HepG2 (cell line): ENCODE measurements at regions of chr4 and their contacts with region 1.

Region 1: DNA sequence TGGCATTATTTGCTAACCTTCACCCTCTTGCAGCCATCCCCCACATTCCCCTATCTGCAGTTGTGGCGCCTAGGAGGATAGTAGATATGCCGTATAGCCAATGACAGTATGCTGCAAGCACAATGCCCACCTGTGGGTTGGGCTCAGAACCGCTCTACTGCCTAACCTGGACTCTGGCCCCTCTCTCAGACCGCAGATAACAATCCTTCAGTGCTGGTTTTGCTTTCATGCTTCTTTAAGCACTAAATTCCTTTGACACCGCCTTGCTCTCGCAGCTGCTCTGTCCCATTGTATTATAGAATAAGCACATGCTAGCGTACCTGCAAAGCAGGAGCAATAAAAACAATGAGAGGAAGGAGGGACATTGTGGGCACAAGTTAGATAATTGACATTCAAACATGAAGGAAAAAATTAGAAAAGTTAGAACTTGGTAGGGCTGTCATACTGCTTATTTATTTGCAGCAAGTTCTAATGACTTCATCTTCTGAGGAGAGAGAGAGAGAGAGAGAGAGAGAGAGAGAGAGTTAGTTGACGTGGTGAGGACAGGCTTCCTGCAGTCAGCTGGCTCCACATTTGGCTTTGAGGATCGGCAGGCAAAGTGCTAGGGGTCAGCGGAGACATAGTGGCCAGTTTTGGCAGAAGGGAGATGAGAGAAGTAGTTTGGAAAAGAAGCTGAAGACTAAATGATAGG is 55.8 kb downstream of the WWC2 start:
- DNase-seq: peak; percentile 96
- ATAC-seq: peak; percentile 99
- H3K4me3 ChIP-seq: peak overlapping the region; percentile 13 to 17 (median 15); a peak in 3 of 6 replicates
- H3K27ac ChIP-seq: peak overlapping the region; percentile 64
- H3K4me1 ChIP-seq: peaks cover 70% of the 10 kb centered on the region
- H3K27me3 ChIP-seq: no peaks in the 10 kb centered on the region
- CTCF ChIP-seq: no peak
- EP300 ChIP-seq: peak; percentile 30 to 52; a peak in 2 of 4 replicates
- POLR2A ChIP-seq: no peak
- RAD21 ChIP-seq: no peak; the same call in 1 of the 2 replicates

Region 2: GRCh38 chr4:182354867-182355266 is 800.0 kb before region 1 on chr4:
- CTCF ChIA-PET with region 1: no interaction called
- POLR2A ChIA-PET with region 1: no interaction called
- in situ Hi-C with region 1: no loop called
- intact Hi-C with region 1: no loop called
- DNase-seq: no peak
- ATAC-seq: no peak
- H3K4me3 ChIP-seq: no peak overlapping the region
- H3K27ac ChIP-seq: no peak overlapping the region
- H3K4me1 ChIP-seq: no peaks in the 10 kb centered on the region
- H3K27me3 ChIP-seq: peaks cover 0 to 10% of the 10 kb centered on the region in 2 experiments; a peak in 1 of 5 replicates
- CTCF ChIP-seq: no peak
- EP300 ChIP-seq: no peak
- POLR2A ChIP-seq: no peak
- RAD21 ChIP-seq: no peak

Region 3: GRCh38 chr4:183080372-183081115 is 74.3 kb before region 1 on chr4:
- CTCF ChIA-PET with region 1: no interaction called
- POLR2A ChIA-PET with region 1: interaction called, 3 read pairs
- in situ Hi-C with region 1: no loop called
- intact Hi-C with region 1: loop called (anchors 1 kb)
- DNase-seq: peak; percentile 93
- ATAC-seq: peak; percentile 90
- H3K4me3 ChIP-seq: peak overlapping the region in 2 of 3 experiments; percentile 27 to 48; a peak in 4 of 6 replicates
- H3K27ac ChIP-seq: peak overlapping the region; percentile 96
- H3K4me1 ChIP-seq: peaks cover 79% of the 10 kb centered on the region
- H3K27me3 ChIP-seq: no peaks in the 10 kb centered on the region
- CTCF ChIP-seq: no peak
- EP300 ChIP-seq: peak in 1 of 2 experiments; percentile 97; a peak in 3 of 4 replicates
- POLR2A ChIP-seq: no peak
- RAD21 ChIP-seq: 0 out of 2 replicates have a peak, but pooled peaks have one; percentile 5

Region 4: DNA sequence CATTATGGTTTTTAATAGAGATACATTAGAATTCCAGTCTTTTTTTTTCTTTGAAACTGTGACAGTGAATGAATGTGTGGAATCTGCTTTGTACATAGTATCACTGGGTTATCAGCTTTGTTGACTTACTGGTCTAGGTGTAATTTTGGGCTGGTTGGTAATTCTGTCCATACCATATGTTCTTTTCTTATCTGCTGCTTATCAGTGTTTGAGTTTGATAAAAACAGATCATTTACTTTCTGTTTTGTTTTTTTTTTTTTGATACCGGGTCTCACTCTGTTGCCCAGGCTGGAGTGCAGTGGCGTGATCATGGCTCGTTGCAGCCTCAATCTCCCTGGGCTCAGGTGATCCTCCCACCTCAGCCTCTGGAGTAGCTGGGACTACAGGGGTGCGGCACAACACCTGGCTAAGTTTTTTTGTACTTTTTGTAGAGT is 43.4 kb before region 1 on chr4:
- CTCF ChIA-PET with region 1: no interaction called
- POLR2A ChIA-PET with region 1: no interaction called
- in situ Hi-C with region 1: no loop called
- intact Hi-C with region 1: loop called (anchors 5 kb)
- DNase-seq: peak; percentile 81
- ATAC-seq: peak; percentile 76
- H3K4me3 ChIP-seq: peak overlapping the region; percentile 19 to 56 (median 36); a peak in 4 of 6 replicates
- H3K27ac ChIP-seq: peak overlapping the region; percentile 88
- H3K4me1 ChIP-seq: peaks cover 98% of the 10 kb centered on the region
- H3K27me3 ChIP-seq: no peaks in the 10 kb centered on the region
- CTCF ChIP-seq: no peak
- EP300 ChIP-seq: peak in 1 of 2 experiments; percentile 76; a peak in 2 of 4 replicates
- POLR2A ChIP-seq: no peak
- RAD21 ChIP-seq: no peak

Region 5: DNA sequence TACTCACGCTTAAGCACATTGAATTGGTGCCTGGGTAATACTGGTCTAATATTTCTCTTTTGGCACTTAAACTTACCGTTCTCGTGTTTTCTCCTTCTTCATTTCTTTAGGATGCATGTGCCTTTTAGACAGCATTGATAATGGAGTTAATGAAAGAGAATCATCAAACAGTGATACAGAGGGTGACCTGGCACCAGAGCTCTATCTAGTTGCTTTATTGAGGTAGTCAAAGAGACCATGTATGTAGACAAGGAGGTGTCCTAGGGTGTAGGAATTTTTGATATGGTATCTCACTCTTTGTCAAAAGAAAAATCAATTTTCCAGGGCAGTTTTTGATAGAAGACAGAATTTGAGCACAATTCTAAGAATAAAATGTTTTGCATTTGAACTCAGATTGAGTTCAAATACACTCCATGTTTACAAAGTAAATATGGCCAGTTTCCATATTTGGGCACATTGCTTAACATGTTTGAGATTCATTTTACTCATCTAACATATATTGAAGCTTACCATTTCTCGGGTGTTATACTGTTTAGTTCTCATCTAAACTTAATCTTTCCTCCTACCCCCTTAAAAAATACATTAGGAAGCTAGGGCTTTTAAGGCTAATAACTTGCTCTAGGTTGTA is 36.2 kb after region 1 on chr4:
- CTCF ChIA-PET with region 1: no interaction called
- POLR2A ChIA-PET with region 1: no interaction called
- in situ Hi-C with region 1: no loop called
- intact Hi-C with region 1: loop called (anchors 2 kb)
- DNase-seq: peak; percentile 39
- ATAC-seq: peak; percentile 71
- H3K4me3 ChIP-seq: no peak overlapping the region
- H3K27ac ChIP-seq: no peak overlapping the region
- H3K4me1 ChIP-seq: peaks cover 45% of the 10 kb centered on the region
- H3K27me3 ChIP-seq: no peaks in the 10 kb centered on the region
- CTCF ChIP-seq: no peak
- EP300 ChIP-seq: peak in 1 of 2 experiments; percentile 27; a peak in 1 of 4 replicates
- POLR2A ChIP-seq: no peak
- RAD21 ChIP-seq: no peak

Region 6: GRCh38 chr4:183261953-183262775 is 107.3 kb after region 1 on chr4:
- CTCF ChIA-PET with region 1: no interaction called
- POLR2A ChIA-PET with region 1: no interaction called
- in situ Hi-C with region 1: no loop called
- intact Hi-C with region 1: loop called (anchors 5 kb)
- DNase-seq: peak; percentile 76
- ATAC-seq: peak; percentile 89
- H3K4me3 ChIP-seq: no peak overlapping the region
- H3K27ac ChIP-seq: peak overlapping the region; percentile 13
- H3K4me1 ChIP-seq: peaks cover 30% of the 10 kb centered on the region
- H3K27me3 ChIP-seq: no peaks in the 10 kb centered on the region
- CTCF ChIP-seq: peak; percentile 89
- EP300 ChIP-seq: 0 out of 4 replicates have a peak, but pooled peaks of 1 of the 2 experiments have one; percentile 10
- POLR2A ChIP-seq: no peak
- RAD21 ChIP-seq: peak; percentile 82

Region 7: GRCh38 chr4:183716302-183716701 is 561.5 kb after region 1 on chr4:
- CTCF ChIA-PET with region 1: no interaction called
- POLR2A ChIA-PET with region 1: no interaction called
- in situ Hi-C with region 1: no loop called
- intact Hi-C with region 1: no loop called
- DNase-seq: no peak
- ATAC-seq: no peak
- H3K4me3 ChIP-seq: no peak overlapping the region
- H3K27ac ChIP-seq: no peak overlapping the region
- H3K4me1 ChIP-seq: peaks cover 17% of the 10 kb centered on the region
- H3K27me3 ChIP-seq: no peaks in the 10 kb centered on the region
- CTCF ChIP-seq: no peak
- EP300 ChIP-seq: no peak
- POLR2A ChIP-seq: no peak
- RAD21 ChIP-seq: no peak